GM13977 (cell line): ENCODE measurements at regions of chr16 and their contacts with region 1.

Region 1: DNA sequence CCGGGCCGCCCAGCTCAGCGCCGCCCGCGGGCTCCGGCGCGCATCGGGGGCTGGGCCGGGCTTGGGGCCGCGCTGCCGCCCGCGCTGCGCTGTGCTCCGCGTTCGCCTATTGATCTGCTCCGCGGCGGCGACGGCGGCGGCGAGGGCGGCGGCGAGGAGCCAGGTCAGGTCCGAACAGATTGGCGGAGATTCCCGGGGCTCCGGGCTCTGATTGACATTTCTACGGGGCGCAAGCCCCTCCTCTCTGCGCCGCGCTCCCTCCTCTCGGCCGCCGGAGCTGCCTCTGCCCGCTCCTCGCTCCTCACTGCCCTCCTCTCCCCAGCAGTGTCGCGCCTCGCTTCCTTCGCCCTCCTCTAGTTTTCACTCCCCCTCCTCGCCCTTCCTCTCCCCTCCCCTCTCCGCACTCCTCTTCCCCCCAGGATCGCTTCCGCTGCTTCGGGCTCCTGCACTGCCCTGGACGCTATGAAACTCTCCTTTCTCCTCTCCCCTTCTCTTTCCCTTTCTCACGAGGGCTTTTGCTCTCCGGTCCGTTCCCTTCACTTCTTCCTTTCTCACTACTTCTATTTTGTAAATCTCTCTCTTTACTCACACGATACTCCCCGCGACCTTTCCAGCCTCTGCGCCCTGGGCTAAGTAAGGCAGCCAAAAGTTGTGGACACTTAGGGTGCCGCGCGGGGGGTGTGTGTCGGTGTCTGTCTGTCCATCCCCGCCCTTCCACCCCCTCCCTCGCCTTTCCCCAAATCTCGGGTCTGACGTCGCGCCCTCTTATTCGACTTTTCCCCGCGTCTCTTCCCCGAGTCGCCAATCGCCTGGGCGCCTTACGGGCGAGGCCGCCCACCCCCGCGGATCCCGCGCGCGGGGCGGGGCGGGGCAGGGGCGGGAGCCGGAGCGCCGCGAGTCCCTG is at the start of gene IRX3:
- DNase-seq: peak; percentile 67
- CTCF ChIP-seq: no peak

Region 2: GRCh38 chr16:53549970-53550690 is 736.2 kb before region 1 on chr16:
- in situ Hi-C with region 1: loop called (anchors 25 kb)
- DNase-seq: peak; percentile 72
- CTCF ChIP-seq: peak; percentile 70

Region 3: GRCh38 chr16:54748611-54749190 is 462.4 kb after region 1 on chr16:
- in situ Hi-C with region 1: no loop called
- DNase-seq: no peak
- CTCF ChIP-seq: no peak

Region 4: DNA sequence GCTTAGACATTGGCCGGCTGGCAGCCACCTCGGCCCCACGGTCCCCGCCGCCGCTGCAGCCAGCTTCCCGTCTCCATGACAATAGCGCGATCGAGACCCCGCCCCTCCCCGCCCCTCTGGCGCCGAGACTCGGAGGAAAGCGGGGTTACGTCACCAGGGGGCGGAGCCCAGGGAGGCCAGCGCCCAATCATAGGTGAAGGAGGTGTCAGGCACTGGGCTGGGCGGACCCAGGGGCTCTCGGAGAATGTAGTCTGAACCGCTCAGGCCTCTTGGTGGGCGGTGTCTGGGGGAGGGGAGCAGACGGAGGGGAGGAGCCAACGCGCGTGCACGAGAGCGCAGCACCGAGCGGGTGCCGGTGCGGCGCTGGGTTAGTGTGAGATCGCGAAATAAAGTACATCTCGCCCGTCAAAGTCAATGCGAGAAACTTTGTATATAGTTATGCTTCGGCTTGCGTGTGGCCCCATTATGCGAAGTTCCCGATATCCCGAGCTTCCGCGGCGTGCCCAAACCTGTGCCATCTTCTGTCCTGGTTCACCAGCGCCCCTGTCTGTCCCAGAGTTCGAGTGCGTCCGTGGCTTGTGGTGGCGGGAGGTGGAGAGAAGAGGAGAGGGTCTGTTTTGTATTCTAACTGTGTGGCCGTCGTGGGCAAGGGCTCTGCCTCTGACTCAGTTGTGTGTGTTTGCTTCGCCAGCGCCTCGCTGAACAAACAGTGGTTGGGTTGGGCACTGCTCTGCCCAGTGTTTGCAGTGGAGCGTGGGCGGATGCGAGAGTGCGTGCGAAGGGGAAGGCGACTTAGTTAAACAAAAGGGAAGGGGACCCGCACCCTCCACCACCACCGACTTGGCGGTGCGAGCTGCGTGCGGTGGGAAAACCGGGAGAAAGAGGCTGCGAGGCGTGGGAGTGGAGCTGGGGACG is 643.0 kb after region 1 on chr16:
- in situ Hi-C with region 1: loop called (anchors 25 kb)
- DNase-seq: peak; percentile 88
- CTCF ChIP-seq: no peak